CD8-positive, alpha-beta T cell (primary cell): ENCODE measurements at regions of chrX and their contacts with region 1.

Region 1: DNA sequence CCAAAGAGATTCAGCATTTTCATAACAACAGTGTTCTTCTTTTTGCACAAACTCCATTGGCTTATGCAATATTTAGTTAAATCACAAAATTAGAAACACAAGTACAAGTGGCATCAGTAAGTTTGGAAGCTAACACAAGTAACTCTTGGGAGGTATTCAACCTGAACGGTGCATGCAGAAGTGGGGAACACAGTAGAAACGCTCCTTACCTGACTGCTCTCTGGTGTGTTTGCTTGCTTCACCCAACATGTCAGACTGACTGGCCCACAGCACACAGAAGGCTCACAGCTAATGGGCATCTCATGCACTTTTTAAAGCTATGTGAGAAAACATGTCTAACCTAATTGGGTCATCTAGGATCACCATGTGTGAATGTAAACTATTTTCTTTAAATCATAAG is 133.6 kb downstream of the MAGEB17 start:
- DNase-seq: no peak
- ATAC-seq: no peak
- H3K4me3 ChIP-seq: no peak overlapping the region
- H3K4me3 Mint-ChIP-seq: no peak overlapping the region
- H3K27ac ChIP-seq: no peak overlapping the region
- H3K27ac Mint-ChIP-seq: no peak overlapping the region
- H3K4me1 ChIP-seq: no peaks in the 10 kb centered on the region
- H3K4me1 Mint-ChIP-seq: no peaks in the 10 kb centered on the region
- H3K27me3 ChIP-seq: no peaks in the 10 kb centered on the region
- H3K27me3 Mint-ChIP-seq: peaks cover 7% of the 10 kb centered on the region
- CTCF ChIP-seq: no peak

Region 2: GRCh38 chrX:15619061-15619777 is 681.6 kb before region 1 on chrX:
- CTCF ChIA-PET with region 1: no interaction called
- POLR2A ChIA-PET with region 1: no interaction called
- intact Hi-C with region 1: no loop called
- DNase-seq: no peak
- ATAC-seq: no peak
- H3K4me3 ChIP-seq: no peak overlapping the region
- H3K4me3 Mint-ChIP-seq: no peak overlapping the region
- H3K27ac ChIP-seq: no peak overlapping the region
- H3K27ac Mint-ChIP-seq: no peak overlapping the region
- H3K4me1 ChIP-seq: no peaks in the 10 kb centered on the region
- H3K4me1 Mint-ChIP-seq: no peaks in the 10 kb centered on the region
- H3K27me3 ChIP-seq: no peaks in the 10 kb centered on the region
- H3K27me3 Mint-ChIP-seq: peaks cover 6% of the 10 kb centered on the region
- CTCF ChIP-seq: no peak

Region 3: GRCh38 chrX:16333453-16333852 is 32.6 kb after region 1 on chrX:
- CTCF ChIA-PET with region 1: no interaction called
- POLR2A ChIA-PET with region 1: no interaction called
- intact Hi-C with region 1: loop called in 1 of 2 experiments (anchors 1 kb)
- DNase-seq: no peak
- ATAC-seq: no peak
- H3K4me3 ChIP-seq: no peak overlapping the region
- H3K4me3 Mint-ChIP-seq: no peak overlapping the region
- H3K27ac ChIP-seq: no peak overlapping the region
- H3K27ac Mint-ChIP-seq: no peak overlapping the region
- H3K4me1 ChIP-seq: no peaks in the 10 kb centered on the region
- H3K4me1 Mint-ChIP-seq: no peaks in the 10 kb centered on the region
- H3K27me3 ChIP-seq: no peaks in the 10 kb centered on the region
- H3K27me3 Mint-ChIP-seq: no peaks in the 10 kb centered on the region
- CTCF ChIP-seq: no peak